WTC11 (cell line): ENCODE measurements at regions of chr5 and their contacts with region 1.

Region 1: GRCh38 chr5:138054847-138055558 is 22.1 kb upstream of the FAM13B start:
- DNase-seq: no peak
- ATAC-seq: peak; percentile 92
- H3K4me3 Mint-ChIP-seq: peak overlapping the region; percentile 58
- H3K27ac Mint-ChIP-seq: no peak overlapping the region
- H3K4me1 Mint-ChIP-seq: peaks cover 5% of the 10 kb centered on the region; the same call in 1 of the 2 replicates
- H3K27me3 Mint-ChIP-seq: peaks cover 5% of the 10 kb centered on the region; the same call in 1 of the 2 replicates
- CTCF ChIP-seq: no peak

Region 2: DNA sequence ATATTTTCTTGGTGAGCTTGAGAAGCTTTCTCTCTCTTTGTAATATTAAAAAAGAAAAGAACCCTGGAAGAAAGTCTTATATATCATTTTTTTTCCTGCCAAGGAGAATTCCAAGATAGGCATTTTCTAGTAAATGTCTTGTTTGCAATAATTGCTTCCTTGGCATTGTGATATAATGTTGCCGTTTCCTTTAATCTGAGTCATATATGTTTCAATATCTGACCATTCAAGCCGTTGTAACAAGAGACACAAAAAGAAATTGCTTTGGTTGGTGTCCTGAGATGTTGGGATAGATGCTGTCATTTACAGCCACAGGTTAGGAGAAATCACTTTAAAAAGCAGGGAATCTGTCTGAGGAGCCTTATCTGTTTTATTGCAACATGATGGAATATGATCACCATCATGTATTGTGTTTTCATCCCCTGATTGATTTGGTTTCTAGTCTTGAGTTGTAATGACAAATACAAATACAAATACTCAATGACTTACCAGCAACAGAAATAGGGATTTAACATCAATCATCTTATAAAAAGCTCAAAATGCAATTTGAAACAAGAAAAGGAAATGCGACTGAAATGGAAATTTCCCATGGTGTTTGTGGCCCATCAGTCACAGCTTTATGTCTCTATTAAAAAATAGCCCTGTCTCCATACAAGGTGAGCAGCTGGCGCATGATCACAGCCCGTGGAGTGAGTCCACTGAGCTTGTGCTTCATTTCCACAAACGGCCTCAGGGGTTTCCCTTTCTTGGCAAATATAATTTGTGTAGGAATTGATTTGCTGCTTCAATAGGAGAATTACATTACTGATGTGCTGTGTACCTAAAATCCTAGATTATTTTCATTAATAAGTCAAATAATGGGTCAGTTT is 1439.5 kb before region 1 on chr5:
- CTCF ChIA-PET with region 1: no interaction called
- POLR2A ChIA-PET with region 1: no interaction called
- DNase-seq: no peak
- ATAC-seq: no peak
- H3K4me3 Mint-ChIP-seq: no peak overlapping the region
- H3K27ac Mint-ChIP-seq: no peak overlapping the region
- H3K4me1 Mint-ChIP-seq: peaks cover 20% of the 10 kb centered on the region
- H3K27me3 Mint-ChIP-seq: no peaks in the 10 kb centered on the region
- CTCF ChIP-seq: no peak

Region 3: DNA sequence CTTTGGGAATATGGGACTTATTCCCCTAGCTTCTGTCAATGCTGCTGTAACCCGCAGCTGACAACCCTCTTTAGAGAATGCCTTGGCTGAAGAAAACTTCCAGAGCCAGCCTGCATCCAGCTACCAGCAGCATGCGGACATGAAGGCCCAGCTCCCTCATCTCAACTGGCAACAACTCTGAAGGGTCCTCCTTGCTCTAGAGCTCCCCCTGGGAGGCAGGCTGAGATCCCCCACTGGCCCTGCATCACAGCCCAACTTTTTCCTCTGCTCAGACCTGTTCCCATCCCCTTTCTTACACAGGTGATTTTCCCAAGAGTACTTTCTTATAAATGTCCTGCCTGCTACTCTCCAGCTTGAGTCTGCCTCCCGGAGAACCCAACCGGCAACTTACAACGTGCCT is 10.1 kb after region 1 on chr5:
- CTCF ChIA-PET with region 1: interaction called, 25 read pairs
- POLR2A ChIA-PET with region 1: interaction called, 3 read pairs
- DNase-seq: peak; percentile 66
- ATAC-seq: peak; percentile 91
- H3K4me3 Mint-ChIP-seq: no peak overlapping the region
- H3K27ac Mint-ChIP-seq: no peak overlapping the region
- H3K4me1 Mint-ChIP-seq: peaks cover 2% of the 10 kb centered on the region; the same call in 1 of the 2 replicates
- H3K27me3 Mint-ChIP-seq: peaks cover 4% of the 10 kb centered on the region; the same call in 1 of the 2 replicates
- CTCF ChIP-seq: peak; percentile 31; the same call in 1 of the 2 replicates